Activated T-helper 2 cell treated with anti-CD3 and anti-CD28 coated beads, Interferon-gamma antibody, Interleukin-2, Interleukin-4, amounts not matched to agents 10 μg/mL and 5 μg/mL and 100 μg/mL, durations not matched to agents 14 hours and 24 hours and 36 hours (primary cell): ENCODE measurements at regions of chr2 and their contacts with region 1.

Region 1: DNA sequence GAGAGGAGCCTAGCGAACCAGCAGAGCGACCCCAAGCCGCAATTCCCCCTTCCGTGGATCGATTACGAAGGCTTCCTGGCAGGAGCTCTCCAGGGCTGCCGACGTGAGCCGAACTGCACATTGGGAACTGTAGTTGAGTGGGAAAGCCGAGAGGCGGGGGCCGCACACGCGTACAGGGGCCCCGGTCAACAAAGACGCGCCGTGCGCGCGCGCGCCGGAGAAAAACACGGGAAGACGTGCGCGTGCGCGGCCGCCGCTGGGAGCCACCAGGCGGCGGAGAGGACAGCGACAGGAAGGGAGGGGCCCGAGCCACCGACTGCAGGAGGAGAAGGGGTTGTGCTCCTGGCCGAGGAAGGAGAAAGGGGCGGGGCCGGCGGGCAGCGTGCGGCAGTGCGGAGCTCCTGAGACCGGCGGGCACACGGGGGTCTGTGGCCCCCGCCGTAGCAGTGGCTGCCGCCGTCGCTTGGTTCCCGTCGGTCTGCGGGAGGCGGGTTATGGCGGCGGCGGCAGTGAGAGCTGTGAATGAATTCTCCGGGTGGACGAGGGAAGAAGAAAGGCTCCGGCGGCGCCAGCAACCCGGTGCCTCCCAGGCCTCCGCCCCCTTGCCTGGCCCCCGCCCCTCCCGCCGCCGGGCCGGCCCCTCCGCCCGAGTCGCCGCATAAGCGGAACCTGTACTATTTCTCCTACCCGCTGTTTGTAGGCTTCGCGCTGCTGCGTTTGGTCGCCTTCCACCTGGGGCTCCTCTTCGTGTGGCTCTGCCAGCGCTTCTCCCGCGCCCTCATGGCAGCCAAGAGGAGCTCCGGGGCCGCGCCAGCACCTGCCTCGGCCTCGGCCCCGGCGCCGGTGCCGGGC is at the start of gene SPAST:
- DNase-seq: peak; percentile 95
- H3K4me3 Mint-ChIP-seq: peak within 1 kb of the TSS; percentile 96
- H3K27ac Mint-ChIP-seq: peak within 1 kb of the TSS; percentile 89
- H3K4me1 Mint-ChIP-seq: peaks cover 18% of the 10 kb centered on the region
- H3K27me3 Mint-ChIP-seq: no peaks in the 10 kb centered on the region
- total RNA-seq, gene SPAST: 18.4 and 18.5 TPM in 2 replicates

Region 2: GRCh38 chr2:32039447-32040219 is 23.9 kb before region 1 on chr2 and contains the start of gene DPY30:
- intact Hi-C with region 1: loop called (anchors 1 kb)
- DNase-seq: peak; percentile 88
- H3K4me3 Mint-ChIP-seq: peak within 1 kb of the TSS; percentile 83
- H3K27ac Mint-ChIP-seq: peak within 1 kb of the TSS; percentile 83
- H3K4me1 Mint-ChIP-seq: peaks cover 7% of the 10 kb centered on the region
- H3K27me3 Mint-ChIP-seq: no peaks in the 10 kb centered on the region
- total RNA-seq, gene DPY30: 72.1 and 77.1 TPM in 2 replicates

Region 3: GRCh38 chr2:32168513-32168912 is 105.0 kb after region 1 on chr2:
- intact Hi-C with region 1: loop called (anchors 1 kb)
- DNase-seq: no peak
- H3K4me3 Mint-ChIP-seq: no peak overlapping the region
- H3K27ac Mint-ChIP-seq: no peak overlapping the region
- H3K4me1 Mint-ChIP-seq: peaks cover 36% of the 10 kb centered on the region
- H3K27me3 Mint-ChIP-seq: no peaks in the 10 kb centered on the region

Region 4: DNA sequence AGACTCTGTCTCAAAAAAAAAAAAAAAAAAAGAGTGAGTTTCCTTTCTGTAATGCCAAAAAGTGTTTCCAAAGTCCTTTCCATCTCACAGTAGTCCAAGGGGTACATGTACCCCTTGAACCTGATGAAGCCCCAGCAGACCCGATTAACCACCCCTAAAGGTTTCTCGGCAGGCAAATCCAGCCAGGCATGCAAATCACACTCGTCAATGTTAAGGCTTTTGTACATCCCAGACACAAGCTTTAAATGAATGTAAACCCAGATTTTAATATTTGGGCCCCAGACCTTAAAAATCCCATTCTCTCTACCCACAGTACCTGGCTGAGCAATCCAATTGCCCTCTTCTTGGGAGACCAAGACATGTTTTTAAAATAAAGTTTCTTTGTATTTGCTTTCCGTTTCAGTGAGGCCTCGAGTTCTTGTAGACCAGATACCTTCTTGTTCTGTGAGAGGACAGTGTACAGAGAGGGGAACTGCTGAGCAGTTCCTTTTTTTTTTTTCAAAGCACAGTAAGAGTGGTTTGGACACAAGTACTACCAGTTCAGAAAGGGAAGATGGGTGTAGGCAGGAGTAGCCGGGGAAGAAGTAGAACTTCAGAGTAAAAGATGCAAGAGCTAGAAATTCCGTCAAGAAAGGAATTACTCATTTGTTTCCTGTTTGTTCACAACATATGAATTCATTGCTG is 201.0 kb after region 1 on chr2 and contains the start of gene NLRC4:
- intact Hi-C with region 1: no loop called
- DNase-seq: no peak
- H3K4me3 Mint-ChIP-seq: no peak within 1 kb of the TSS
- H3K27ac Mint-ChIP-seq: peak within 1 kb of the TSS; percentile 80
- H3K4me1 Mint-ChIP-seq: peaks cover 4% of the 10 kb centered on the region
- H3K27me3 Mint-ChIP-seq: peaks cover 4% of the 10 kb centered on the region
- total RNA-seq, gene NLRC4: 0.16 TPM in 1 of 2 replicates, not detected in the other

Region 5: GRCh38 chr2:32277674-32278482 is 214.3 kb after region 1 on chr2 and contains the start of gene YIPF4:
- intact Hi-C with region 1: loop called (anchors 1 kb)
- DNase-seq: peak; percentile 85
- H3K4me3 Mint-ChIP-seq: peak within 1 kb of the TSS; percentile 97
- H3K27ac Mint-ChIP-seq: peak within 1 kb of the TSS; percentile 94
- H3K4me1 Mint-ChIP-seq: peaks cover 7% of the 10 kb centered on the region
- H3K27me3 Mint-ChIP-seq: peaks cover 2% of the 10 kb centered on the region
- total RNA-seq, gene YIPF4: 33.4 and 36.7 TPM in 2 replicates

Region 6: GRCh38 chr2:32356735-32357644 is 293.5 kb after region 1 on chr2 and contains the start of gene BIRC6:
- intact Hi-C with region 1: loop called (anchors 1 kb)
- DNase-seq: peak; percentile 94
- H3K4me3 Mint-ChIP-seq: peak within 1 kb of the TSS; percentile 89
- H3K27ac Mint-ChIP-seq: peak within 1 kb of the TSS; percentile 92
- H3K4me1 Mint-ChIP-seq: peaks cover 34% of the 10 kb centered on the region
- H3K27me3 Mint-ChIP-seq: no peaks in the 10 kb centered on the region
- total RNA-seq, gene BIRC6: 111 and 123 TPM in 2 replicates